HAP-1 (cell line): ENCODE measurements at regions of chr5 and their contacts with region 1.

Region 1: DNA sequence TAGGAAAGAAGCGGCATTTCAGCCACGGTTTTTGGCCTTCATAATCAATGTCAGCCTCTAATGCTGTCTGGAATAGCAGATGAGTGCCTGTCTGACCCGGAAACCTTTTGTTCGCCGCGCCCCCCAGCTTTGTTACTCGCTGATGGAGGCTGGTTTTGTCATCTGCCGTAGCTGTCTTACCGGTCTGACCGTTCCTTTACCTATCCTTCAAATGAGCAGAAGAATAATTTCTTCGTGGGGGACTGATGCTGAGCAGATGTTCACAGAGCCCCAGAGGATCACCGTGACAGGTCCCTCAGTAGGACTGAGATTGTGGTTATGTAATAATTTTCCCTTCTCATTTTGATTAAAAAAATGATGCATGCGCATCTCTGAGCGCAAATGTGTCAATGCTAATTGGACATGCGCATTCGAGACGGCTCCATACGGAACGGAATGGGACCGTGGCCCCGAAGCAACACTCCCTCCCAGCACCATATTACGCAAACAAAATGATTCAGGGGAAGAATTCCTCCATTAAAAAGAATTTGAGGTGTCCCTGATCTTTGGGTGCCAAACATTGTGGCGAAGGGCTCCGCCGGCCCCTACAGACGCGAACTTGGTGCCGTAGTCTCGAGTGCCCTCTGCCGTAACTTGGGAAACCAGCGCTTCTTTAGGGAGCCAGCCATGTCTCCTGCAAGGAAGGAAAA is 27.6 kb downstream of the TLX3 start:
- DNase-seq: peak; percentile 46 to 65
- H3K4me3 ChIP-seq: peak overlapping the region; percentile 27
- H3K4me1 ChIP-seq: peaks cover 4% of the 10 kb centered on the region; the same call in 1 of the 2 replicates
- H3K27me3 ChIP-seq: peaks cover 7% of the 10 kb centered on the region

Region 2: GRCh38 chr5:170747851-170748250 is 588.8 kb before region 1 on chr5:
- in situ Hi-C with region 1: loop called (anchors 10 kb)
- DNase-seq: peak in 1 of 2 experiments; percentile 39
- H3K4me3 ChIP-seq: no peak overlapping the region
- H3K4me1 ChIP-seq: peaks cover 3% of the 10 kb centered on the region; the same call in 1 of the 2 replicates
- H3K27me3 ChIP-seq: peaks cover 12% of the 10 kb centered on the region

Region 3: GRCh38 chr5:171207256-171207847 is 129.3 kb before region 1 on chr5:
- in situ Hi-C with region 1: loop called (anchors 10 kb)
- DNase-seq: peak; percentile 29 to 54
- H3K4me3 ChIP-seq: no peak overlapping the region
- H3K4me1 ChIP-seq: no peaks in the 10 kb centered on the region
- H3K27me3 ChIP-seq: peaks cover 18% of the 10 kb centered on the region; the same call in 1 of the 2 replicates

Region 4: GRCh38 chr5:171258737-171259415 is 77.8 kb before region 1 on chr5:
- in situ Hi-C with region 1: no loop called
- DNase-seq: no peak
- H3K4me3 ChIP-seq: no peak overlapping the region
- H3K4me1 ChIP-seq: no peaks in the 10 kb centered on the region
- H3K27me3 ChIP-seq: peaks cover 9% of the 10 kb centered on the region; the same call in 1 of the 2 replicates